Psoas muscle (tissue), 8 donors: ENCODE measurements at regions of chr7 and their contacts with region 1.

Region 1: DNA sequence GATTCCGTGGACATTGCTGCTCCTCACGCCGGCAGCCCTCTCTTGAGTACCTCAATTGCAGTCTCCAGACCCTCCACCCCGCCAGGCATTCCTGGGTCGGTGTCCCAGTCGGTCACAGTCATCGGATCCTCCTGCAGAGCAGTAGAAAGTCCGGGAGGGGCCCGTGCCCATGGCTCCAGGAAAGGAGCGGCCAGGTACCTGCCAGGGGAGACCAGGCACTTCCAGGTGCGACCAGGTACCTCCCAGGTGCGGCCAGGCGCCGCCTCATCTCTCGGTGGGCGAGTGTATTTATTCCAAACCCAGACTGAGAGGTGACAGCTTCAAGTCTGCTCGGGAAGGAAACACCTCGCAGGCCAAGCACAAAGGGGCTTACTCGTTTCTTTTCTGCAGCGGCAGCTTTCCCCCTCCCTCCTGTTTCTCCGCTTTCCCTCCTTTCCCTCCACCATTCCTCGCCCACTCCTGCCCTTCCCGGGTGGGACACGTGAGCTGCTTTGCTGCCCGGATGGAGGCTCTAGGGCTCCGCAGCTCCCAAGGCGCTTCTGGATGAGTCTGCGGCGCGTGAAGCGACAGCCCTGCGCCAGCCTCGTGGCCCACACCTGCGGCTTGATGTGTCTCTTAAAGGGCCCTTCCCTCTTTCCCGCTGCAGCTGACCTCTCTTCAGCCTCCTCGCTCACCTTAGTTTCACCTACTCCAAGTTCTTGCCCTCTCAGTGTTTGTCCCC is 39.4 kb upstream of the AGK start:
- DNase-seq: peak; percentile 24 to 63
- ATAC-seq: peak; percentile 75 to 96 (median 82)
- H3K4me3 ChIP-seq: peak overlapping the region; percentile 61
- H3K27ac ChIP-seq: no peak overlapping the region
- H3K4me1 ChIP-seq: peaks cover 4% of the 10 kb centered on the region
- H3K27me3 ChIP-seq: peaks cover 0 to 9% (median 3%) of the 10 kb centered on the region in 3 donors
- CTCF ChIP-seq: no peak

Region 2: GRCh38 chr7:141369422-141369821 is 142.4 kb before region 1 on chr7:
- intact Hi-C with region 1: no loop called
- DNase-seq: no peak
- ATAC-seq: peak in 2 of 4 donors; percentile 41 to 62
- H3K4me3 ChIP-seq: no peak overlapping the region
- H3K27ac ChIP-seq: peak overlapping the region; percentile 36
- H3K4me1 ChIP-seq: peaks cover 19% of the 10 kb centered on the region
- H3K27me3 ChIP-seq: no peaks in the 10 kb centered on the region
- CTCF ChIP-seq: no peak

Region 3: GRCh38 chr7:142298009-142298408 is 786.2 kb after region 1 on chr7:
- intact Hi-C with region 1: loop called in 1 of 2 experiments (anchors 5 kb)
- DNase-seq: no peak
- ATAC-seq: no peak
- H3K4me3 ChIP-seq: no peak overlapping the region
- H3K27ac ChIP-seq: no peak overlapping the region
- H3K4me1 ChIP-seq: no peaks in the 10 kb centered on the region
- H3K27me3 ChIP-seq: peaks cover 0 to 4% (median 0%) of the 10 kb centered on the region in 3 donors
- CTCF ChIP-seq: no peak